ENCODE measurements at regions of chr12 and their contacts with region 1.

Region 1: GRCh38 chr12:94532490-94533422 is 73.1 kb upstream of the CEP83 start:
- DNase-seq: peak; percentile 73
- H3K4me3 ChIP-seq: no peak overlapping the region
- H3K27ac ChIP-seq: no peak overlapping the region
- H3K4me1 ChIP-seq: no peaks in the 10 kb centered on the region
- H3K27me3 ChIP-seq: no peaks in the 10 kb centered on the region
- CTCF ChIP-seq: peak; percentile 54

Region 2: DNA sequence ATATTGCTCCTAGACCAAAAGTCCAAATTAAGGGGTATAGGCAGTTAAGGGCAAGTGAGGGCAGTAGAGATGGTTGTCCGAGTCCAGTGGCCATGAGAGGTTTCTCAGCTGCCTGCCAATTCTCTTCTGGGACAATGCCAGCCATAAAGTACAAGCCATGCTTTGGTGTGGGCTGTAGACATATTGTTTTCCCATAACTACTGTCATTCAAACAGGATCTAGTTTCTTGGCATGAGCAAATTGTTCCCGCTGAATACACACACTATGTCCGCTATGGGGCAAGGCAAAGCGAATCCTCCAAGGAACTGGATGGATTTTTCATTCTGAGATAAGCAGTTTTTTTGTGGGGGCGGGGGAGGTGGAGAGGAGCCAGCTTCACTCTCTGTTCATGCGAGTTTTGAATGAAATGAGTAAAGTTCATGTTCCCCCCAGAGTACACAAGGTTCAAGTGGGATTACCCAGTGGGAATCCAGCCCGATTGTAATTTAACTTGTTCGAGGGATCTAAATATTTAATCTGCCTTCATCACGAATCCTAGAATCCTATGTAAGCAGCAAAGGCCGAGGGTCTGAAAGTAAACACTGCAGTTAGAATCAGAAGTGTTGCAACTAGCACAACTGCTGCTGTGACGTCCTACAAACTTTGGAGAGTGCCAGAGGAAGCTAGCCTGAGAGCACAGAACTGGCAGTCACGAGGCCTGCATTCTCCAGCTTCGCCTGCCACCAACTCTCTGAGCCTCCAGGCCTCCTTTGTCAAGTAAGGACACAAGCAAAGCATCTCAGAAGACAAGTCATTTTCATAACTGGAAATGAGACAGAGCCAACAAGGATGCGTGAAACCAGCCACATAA is 718.6 kb before region 1 on chr12:
- intact Hi-C with region 1: no loop called
- DNase-seq: peak; percentile 52
- H3K4me3 ChIP-seq: no peak overlapping the region
- H3K27ac ChIP-seq: peak overlapping the region; percentile 57
- H3K4me1 ChIP-seq: no peaks in the 10 kb centered on the region
- H3K27me3 ChIP-seq: no peaks in the 10 kb centered on the region
- CTCF ChIP-seq: no peak

Region 3: GRCh38 chr12:94133964-94134795 is 398.6 kb before region 1 on chr12:
- intact Hi-C with region 1: loop called (anchors 2 kb)
- DNase-seq: no peak
- H3K4me3 ChIP-seq: no peak overlapping the region
- H3K27ac ChIP-seq: no peak overlapping the region
- H3K4me1 ChIP-seq: no peaks in the 10 kb centered on the region
- H3K27me3 ChIP-seq: no peaks in the 10 kb centered on the region
- CTCF ChIP-seq: peak; percentile 87